Right ventricle myocardium inferior (tissue), 1 donor: ENCODE measurements at regions of chr9 and their contacts with region 1.

Region 1: DNA sequence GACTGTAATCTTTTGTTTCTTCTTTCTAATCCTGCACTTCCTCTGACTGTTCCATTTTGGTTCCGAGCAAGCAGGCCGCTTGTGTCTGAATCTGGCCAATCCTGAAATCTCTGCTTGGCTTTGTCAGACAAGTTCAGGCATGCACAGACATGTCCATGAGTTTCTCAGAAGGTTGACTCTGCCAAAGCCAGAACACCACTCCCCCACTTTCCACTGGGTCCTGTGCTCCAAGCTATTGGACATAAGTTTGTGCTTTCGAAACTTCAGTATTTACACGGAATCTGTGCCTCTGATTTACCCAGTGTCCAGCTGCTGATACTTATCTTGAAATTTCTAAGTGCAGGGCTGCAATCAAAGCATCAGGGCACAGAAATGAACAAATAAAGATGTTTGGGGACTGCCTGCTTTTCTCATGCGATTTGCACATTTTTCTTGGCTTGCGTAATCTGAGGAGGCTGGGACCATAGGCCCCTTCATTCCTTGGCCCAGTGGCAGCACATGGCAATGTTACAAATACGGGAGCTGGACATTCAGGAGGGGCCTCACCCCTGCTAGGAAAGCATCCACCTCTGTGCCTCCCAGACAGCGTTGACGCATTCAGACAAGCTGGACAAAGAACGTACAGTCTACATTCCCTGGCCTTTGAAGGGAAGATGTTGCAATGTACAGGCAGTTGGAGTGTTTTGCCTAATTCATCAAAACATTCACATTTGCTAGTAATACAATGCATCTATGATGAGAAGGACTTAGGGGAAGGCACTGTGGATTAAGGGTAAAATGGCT is 209.2 kb upstream of the PAPPA start:
- DNase-seq: peak; percentile 86
- ATAC-seq: peak; percentile 97

Region 2: DNA sequence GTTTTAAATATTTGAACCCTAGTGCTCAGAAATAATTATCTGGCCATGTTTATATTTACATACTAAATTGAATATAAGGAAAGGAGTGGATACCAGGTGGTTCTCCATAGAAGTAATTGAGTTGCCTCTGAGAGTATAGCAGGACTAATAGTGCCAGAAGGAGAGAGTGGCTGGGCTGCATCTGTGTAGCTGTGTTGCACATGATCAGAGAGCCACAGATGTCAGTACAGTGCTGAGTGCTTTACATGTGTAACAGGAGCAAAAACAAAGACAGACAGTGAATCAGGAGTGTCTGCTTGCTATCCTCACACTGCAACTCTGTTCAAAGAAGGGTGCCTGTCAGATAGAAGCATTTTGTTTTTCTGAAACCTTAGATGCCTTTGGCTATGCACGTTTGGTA is 144.6 kb before region 1 on chr9:
- intact Hi-C with region 1: no loop called
- DNase-seq: no peak
- ATAC-seq: no peak

Region 3: DNA sequence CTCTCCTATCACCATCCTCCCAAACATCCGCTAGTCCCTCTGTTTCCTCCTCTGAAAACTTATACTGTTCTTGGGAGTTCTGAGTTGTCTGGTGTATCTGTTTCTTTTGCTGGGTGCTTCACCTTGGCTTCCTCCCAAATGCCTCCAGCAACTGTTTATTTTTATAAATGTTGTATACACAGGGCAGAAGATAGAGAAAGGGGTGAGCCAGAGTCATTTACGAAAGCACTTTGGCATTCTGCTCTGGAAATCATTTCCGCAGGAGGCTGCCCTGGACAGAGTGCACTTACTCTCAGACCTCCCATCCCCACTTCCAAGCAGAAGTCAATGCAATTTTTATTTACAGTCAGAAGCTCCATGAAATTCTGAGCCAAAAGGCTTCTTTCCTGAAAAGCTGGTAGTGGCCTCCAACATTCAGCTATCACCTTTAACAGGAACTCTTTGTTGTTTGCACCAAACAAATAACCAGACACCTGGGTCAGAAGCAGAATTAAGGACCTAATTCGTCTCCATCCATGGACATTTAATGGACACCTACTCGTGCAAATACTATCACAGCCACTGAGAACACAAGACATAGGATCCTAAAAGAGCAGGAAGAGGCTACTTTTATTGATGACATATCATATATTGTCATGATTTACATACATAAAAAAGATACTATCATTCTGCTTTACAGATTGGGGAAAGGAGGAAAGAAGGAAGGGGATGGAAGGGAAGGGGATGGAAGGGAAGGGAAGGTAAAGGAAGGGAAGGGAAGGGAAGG is 20.3 kb before region 1 on chr9:
- intact Hi-C with region 1: loop called (anchors 2 kb)
- DNase-seq: no peak
- ATAC-seq: peak; percentile 93

Region 4: GRCh38 chr9:116087246-116087645 is 142.9 kb after region 1 on chr9:
- intact Hi-C with region 1: loop called (anchors 5 kb)
- DNase-seq: peak; percentile 51
- ATAC-seq: peak; percentile 90